Right ventricle myocardium inferior (tissue), 1 donor: ENCODE measurements at regions of chr5 and their contacts with region 1.

Region 1: GRCh38 chr5:146069780-146070099 is 35.6 kb downstream of the PLAC8L1 start:
- DNase-seq: no peak
- ATAC-seq: no peak

Region 2: GRCh38 chr5:146059460-146060220 is 10.1 kb before region 1 on chr5:
- intact Hi-C with region 1: loop called (anchors 1 kb)
- DNase-seq: peak; percentile 71
- ATAC-seq: peak; percentile 87

Region 3: GRCh38 chr5:146103594-146103993 is 33.9 kb after region 1 on chr5:
- intact Hi-C with region 1: loop called (anchors 1 kb)
- DNase-seq: no peak
- ATAC-seq: peak; percentile 92

Region 4: DNA sequence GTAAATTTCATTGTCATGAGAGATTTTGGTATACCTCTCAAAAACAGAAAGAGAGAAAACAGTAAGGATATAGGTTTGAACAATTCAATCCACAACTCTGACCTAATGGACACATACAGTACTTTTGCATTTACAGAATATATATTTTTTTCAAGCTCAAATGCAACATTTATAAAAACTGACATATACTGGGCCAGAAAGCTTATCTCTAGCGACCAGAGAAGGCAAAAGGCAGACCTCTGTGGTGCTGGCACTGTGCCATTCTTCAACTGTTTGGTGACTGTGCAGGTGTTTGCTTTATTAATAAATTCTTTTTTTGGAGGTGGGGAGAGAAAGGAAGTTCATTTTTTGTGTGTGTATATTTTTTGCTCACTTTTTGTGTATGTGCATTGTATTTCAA is 41.7 kb after region 1 on chr5:
- intact Hi-C with region 1: loop called (anchors 1 kb)
- DNase-seq: no peak
- ATAC-seq: no peak

Region 5: DNA sequence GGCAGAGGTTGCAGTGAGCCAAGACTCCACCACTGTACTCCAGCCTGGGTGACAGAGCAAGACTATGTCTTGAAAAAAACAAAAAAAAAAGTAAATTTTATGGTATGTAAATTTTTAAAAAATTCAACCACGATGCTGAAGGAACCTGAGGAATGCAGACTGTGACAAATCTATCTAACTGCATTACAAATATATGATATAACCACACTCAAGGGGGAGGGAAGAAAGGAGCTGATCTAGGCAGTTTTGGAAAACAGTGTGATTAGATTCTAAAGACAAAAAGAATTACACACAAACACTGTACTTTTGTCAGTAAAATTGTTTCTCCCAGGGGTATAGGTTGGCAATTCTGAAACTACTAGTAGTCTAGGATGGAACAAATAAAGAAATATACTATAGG is 95.7 kb after region 1 on chr5:
- intact Hi-C with region 1: no loop called
- DNase-seq: no peak
- ATAC-seq: no peak

Region 6: DNA sequence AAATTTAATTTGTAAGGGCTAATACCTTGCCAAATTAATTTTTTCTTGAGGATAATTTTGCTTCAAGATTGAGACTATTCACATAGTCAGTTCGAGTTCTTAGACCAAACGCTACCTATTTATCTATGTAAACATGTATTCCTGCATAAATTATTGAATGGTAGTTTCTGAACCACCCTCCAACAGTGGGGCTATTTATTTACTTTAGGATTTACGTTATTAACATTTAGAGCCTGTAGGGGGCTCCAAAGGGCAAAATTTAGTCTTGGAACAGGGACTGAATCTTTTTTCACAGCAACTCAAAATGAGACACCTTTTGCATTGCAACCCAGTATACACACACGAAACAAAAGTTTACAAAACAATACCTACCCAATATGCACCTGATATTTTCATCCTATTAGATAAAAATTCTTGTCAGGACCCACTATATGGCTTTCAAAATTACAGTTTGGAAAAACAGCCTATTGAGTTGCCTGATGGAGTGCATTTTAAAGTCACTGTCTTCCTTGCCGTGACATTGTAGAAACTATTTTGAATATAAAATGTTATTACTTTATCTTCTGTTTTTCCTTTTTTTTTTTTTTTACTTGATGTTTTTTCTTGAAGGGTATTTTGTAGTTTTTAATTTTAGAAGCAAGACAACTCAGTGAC is 221.8 kb after region 1 on chr5:
- intact Hi-C with region 1: no loop called
- DNase-seq: no peak
- ATAC-seq: no peak